ENCODE measurements at regions of chr4 and their contacts with region 1.

Region 1: GRCh38 chr4:80202190-80202711 is 4.9 kb downstream of the PRDM8 start:
- DNase-seq: peak; percentile 77
- ATAC-seq: peak; percentile 60
- H3K4me3 Mint-ChIP-seq: peak overlapping the region; percentile 73
- H3K27ac Mint-ChIP-seq: peak overlapping the region; percentile 70
- H3K4me1 Mint-ChIP-seq: peaks cover 26% of the 10 kb centered on the region
- H3K27me3 Mint-ChIP-seq: peaks cover 18% of the 10 kb centered on the region
- CTCF ChIP-seq: peak; percentile 77

Region 2: DNA sequence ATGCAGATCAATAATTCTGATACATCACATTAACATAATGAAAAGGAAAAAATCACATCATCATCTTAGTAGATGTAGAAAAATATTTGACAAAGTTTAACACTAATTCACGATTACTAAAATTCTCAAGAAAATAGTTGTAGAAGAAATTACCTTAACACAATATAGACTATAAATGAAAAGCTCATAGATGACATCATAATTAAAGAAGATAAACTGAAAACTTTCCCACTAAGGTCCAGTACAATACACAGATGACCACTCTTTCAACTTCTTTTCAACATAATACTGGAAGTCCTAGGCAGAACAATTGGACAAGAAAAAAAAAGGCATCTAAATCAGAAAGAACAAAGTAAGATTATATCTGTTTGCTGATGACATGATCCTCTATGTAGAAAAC is 431.4 kb before region 1 on chr4:
- CTCF ChIA-PET with region 1: no interaction called
- POLR2A ChIA-PET with region 1: no interaction called
- intact Hi-C with region 1: no loop called
- DNase-seq: no peak
- ATAC-seq: no peak
- H3K4me3 Mint-ChIP-seq: no peak overlapping the region
- H3K27ac Mint-ChIP-seq: no peak overlapping the region
- H3K4me1 Mint-ChIP-seq: no peaks in the 10 kb centered on the region
- H3K27me3 Mint-ChIP-seq: peaks cover 4% of the 10 kb centered on the region
- CTCF ChIP-seq: no peak

Region 3: DNA sequence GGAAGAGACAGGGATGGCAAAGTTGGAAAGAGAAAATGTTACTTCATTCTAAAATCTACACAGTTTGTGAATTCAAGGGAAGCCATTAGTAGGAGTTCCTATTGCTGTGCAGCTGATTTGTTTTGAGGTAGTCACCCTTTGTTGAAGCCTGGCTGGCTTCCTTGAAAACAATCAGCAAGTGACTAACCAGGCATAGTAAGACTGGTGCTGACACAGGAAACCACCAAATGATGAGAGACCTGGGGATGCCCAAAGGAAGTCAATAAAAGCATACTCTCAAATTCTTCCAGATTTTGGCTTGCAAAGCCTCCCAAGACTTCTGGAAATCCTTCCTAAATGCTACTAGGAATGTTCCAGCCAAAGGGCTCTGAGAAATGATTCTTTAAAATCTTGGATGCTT is 28.9 kb before region 1 on chr4:
- CTCF ChIA-PET with region 1: interaction called, 17 read pairs
- POLR2A ChIA-PET with region 1: interaction called, 5 read pairs
- intact Hi-C with region 1: no loop called
- DNase-seq: peak; percentile 75
- ATAC-seq: peak; percentile 86
- H3K4me3 Mint-ChIP-seq: peak overlapping the region; percentile 38
- H3K27ac Mint-ChIP-seq: peak overlapping the region; percentile 90
- H3K4me1 Mint-ChIP-seq: peaks cover 53% of the 10 kb centered on the region
- H3K27me3 Mint-ChIP-seq: no peaks in the 10 kb centered on the region
- CTCF ChIP-seq: no peak

Region 4: GRCh38 chr4:80189956-80190677 is 12.1 kb before region 1 on chr4:
- CTCF ChIA-PET with region 1: interaction called, 44 read pairs
- POLR2A ChIA-PET with region 1: interaction called, 40 read pairs
- intact Hi-C with region 1: loop called (anchors 2 kb)
- DNase-seq: no peak
- ATAC-seq: no peak
- H3K4me3 Mint-ChIP-seq: no peak overlapping the region
- H3K27ac Mint-ChIP-seq: no peak overlapping the region
- H3K4me1 Mint-ChIP-seq: peaks cover 9% of the 10 kb centered on the region
- H3K27me3 Mint-ChIP-seq: peaks cover 17% of the 10 kb centered on the region
- CTCF ChIP-seq: no peak

Region 5: DNA sequence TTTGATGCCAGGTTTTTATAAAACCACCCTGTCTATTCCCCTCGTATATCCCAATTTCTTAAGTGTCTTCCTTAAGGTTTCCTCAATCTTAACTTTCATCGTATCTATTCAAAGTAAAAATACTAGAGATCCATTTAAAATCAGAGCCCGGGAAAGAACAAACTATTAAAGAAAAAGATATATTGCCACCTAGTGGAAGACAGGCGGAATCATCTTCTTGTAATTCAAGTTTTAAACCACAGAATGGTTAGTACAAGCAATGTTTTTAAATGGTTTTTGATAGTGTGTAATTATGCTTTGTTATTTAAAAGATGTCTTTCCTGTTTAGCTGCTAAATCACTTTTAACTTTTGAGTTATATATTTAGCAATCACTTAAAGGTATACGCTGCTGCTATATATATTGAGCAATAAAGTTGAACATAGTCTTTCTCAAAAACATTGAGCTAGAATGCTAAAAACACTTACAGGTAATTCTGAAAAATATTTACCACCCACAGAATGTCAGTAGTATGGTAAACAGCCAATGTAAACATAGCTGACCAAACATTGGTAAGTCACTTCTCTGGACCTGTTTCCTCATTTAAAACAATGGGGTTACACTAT is 13.3 kb after region 1 on chr4:
- CTCF ChIA-PET with region 1: interaction called, 23 read pairs
- POLR2A ChIA-PET with region 1: interaction called, 3 read pairs
- intact Hi-C with region 1: no loop called
- DNase-seq: no peak
- ATAC-seq: no peak
- H3K4me3 Mint-ChIP-seq: no peak overlapping the region
- H3K27ac Mint-ChIP-seq: no peak overlapping the region
- H3K4me1 Mint-ChIP-seq: no peaks in the 10 kb centered on the region
- H3K27me3 Mint-ChIP-seq: peaks cover 22% of the 10 kb centered on the region
- CTCF ChIP-seq: peak; percentile 85

Region 6: DNA sequence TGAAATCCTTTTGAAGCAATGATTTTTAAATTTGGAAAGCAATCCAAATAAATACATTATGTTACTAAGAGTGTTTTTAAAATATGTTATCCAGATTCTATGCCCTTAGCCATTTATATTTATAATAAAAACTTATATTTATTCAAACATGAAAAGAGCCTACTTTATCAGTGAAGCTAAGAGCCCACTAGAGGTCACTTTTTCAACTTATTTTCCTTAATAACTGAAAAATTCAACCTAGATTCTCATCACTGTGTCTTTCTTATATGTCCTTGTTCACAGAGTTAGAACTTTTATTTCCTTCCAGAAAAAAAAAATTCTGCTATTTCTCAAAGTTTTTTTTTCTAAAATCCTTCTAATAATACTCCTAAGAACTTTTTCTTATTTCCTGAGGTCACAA is 18.9 kb after region 1 on chr4:
- CTCF ChIA-PET with region 1: interaction called, 15 read pairs
- POLR2A ChIA-PET with region 1: interaction called, 3 read pairs
- intact Hi-C with region 1: no loop called
- DNase-seq: no peak
- ATAC-seq: no peak
- H3K4me3 Mint-ChIP-seq: no peak overlapping the region
- H3K27ac Mint-ChIP-seq: no peak overlapping the region
- H3K4me1 Mint-ChIP-seq: no peaks in the 10 kb centered on the region
- H3K27me3 Mint-ChIP-seq: peaks cover 25% of the 10 kb centered on the region
- CTCF ChIP-seq: peak; percentile 25

Region 7: DNA sequence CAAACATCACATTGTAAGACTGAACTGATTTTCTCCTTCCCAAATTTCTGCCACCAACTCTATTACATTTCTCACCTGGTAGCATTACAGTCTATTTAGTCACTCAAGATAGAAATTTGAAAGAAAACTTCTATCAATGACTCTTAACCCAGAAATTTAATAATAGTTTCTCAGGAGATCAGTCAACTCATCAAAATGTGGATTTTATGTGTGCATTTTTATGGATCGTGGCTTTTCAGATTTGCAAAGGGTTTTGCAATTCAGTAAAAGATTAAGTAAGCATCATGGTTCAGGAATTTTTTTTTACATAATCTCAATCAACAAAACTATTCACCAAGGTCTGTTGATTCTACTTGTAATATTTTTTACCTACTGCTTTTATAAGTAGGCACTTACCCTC is 244.4 kb after region 1 on chr4:
- CTCF ChIA-PET with region 1: no interaction called
- POLR2A ChIA-PET with region 1: no interaction called
- intact Hi-C with region 1: no loop called
- DNase-seq: no peak
- ATAC-seq: no peak
- H3K4me3 Mint-ChIP-seq: no peak overlapping the region
- H3K27ac Mint-ChIP-seq: no peak overlapping the region
- H3K4me1 Mint-ChIP-seq: no peaks in the 10 kb centered on the region
- H3K27me3 Mint-ChIP-seq: no peaks in the 10 kb centered on the region
- CTCF ChIP-seq: no peak